AG04449 (cell line): ENCODE measurements at regions of chr7 and their contacts with region 1.

Region 1: DNA sequence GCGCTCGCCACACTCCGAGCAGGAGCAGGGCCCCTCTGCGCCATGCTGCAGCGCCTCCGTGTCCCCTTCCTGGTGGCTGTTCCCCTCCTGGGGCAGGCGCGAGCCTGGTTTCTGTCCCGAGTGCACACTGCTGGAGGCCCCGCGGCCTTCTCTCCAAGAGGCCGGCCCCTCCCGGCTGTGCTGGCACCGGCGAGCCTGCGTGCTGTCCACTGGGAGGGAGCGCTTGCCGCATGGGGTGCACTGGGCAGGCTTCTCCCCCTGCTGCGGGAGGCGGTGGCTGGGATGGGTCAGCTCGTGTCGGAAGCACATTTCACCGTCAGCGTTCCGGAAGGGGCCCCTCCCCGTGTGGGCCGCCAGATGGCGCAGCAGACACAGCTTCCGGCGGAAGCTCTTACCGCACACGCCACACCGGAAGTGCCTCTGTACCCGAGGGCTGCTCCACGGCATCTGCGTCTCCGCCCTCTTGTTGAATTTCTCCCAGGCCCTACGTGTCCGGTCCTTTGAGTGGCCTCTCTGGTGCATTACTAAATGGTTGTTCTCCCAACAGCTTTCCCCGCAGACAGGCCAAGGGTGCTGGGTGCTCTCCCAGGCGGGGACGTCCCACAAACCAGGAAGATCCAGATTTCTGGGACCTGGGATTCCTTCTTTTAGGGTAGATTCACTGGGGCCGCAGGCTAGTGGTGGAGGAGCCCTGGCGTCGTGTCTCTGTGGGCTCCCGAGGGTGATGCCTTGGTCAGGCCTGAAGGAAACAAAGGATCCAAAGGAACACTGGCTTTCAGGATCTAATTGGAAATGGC is 18.7 kb downstream of the ZNF786 start:
- DNase-seq: no peak
- H3K4me3 ChIP-seq: no peak overlapping the region
- CTCF ChIP-seq: peak; percentile 21

Region 2: DNA sequence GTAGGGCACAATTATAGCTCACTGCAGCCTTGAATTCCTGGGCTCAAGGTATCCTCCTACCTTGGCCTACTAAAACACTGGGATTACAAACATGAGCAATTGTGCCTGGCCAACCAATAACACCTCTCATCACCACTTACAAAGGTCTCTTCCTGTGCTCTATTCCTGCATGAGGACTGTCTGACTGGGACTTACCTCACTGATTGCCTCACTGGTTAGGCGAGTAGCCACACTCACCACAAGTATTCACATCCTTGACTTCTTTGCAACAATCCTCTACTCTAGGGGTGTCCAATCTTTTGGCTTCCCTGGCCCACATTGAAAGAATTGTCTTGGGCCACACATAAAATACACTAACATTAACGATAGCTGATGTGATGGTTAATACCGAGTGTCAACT is 20.9 kb before region 1 on chr7:
- CTCF ChIA-PET with region 1: interaction called, 28 read pairs
- POLR2A ChIA-PET with region 1: no interaction called
- DNase-seq: no peak
- H3K4me3 ChIP-seq: no peak overlapping the region
- CTCF ChIP-seq: no peak

Region 3: DNA sequence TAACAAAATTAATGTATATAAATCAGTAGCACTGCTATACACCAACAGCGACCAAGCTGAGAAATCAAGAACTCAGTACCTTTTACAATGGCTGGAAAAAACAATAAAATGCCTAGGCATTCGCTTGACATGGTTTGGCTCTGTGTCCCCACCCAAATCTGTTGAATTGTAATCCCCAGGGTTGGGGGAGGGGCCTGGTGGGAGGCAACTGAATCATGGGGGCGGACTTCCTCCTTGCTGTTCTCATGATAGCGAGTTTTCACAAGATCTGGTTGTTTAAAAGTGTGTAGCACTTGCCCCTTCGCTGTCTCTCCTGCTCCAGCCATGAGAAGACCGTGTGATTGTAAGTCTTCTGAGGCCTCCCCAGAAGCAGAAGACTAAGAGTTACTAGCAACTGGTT is 10.1 kb after region 1 on chr7:
- CTCF ChIA-PET with region 1: interaction called, 36 read pairs
- POLR2A ChIA-PET with region 1: no interaction called
- DNase-seq: no peak
- H3K4me3 ChIP-seq: no peak overlapping the region
- CTCF ChIP-seq: no peak

Region 4: DNA sequence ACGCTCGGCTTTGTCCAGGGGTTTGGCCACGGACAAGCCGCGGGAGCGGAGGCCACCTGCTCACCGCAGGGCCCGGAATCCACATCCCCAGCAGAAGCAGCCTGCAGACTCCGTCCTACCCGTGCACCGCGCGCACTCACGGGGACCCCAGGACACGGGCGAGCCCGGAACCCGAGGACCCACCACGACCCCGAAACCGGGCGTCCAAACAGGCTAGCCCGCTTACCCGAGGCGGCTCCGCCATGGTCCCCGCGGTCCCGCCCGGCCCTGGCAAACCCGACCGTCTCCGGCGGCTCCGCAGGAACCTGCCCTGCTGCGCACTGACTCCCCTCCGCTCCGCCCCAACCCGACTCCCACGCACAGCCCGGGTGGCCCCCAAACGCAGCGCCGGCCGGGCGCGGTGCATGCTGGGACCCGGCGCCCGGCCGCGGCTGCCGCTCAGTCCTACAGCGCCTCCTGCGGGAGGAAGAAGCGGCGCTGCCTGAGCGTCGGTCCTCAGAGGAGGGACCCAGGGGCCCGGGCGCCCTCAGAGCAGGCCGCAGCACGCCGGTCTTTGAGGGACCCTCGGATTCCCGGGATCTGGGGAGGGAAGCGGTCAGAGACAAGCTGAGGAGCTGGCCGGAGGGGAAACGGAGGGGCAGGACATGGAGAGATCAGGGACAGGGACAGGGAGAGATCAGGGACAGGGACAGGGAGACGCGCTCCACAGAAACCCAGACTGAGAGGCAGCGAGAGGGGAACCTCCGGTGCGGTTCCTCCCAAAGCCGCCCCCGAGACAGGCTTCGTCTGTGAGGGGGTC is 18.8 kb after region 1 on chr7 and contains the start of gene ZNF786:
- CTCF ChIA-PET with region 1: interaction called, 31 read pairs
- POLR2A ChIA-PET with region 1: no interaction called
- DNase-seq: no peak
- H3K4me3 ChIP-seq: peak within 1 kb of the TSS; percentile 90
- CTCF ChIP-seq: peak; percentile 91